K562 (cell line): ENCODE measurements at regions of chr11 and their contacts with region 1.

Region 1: GRCh38 chr11:63635762-63636465 is 21.7 kb upstream of the PLAAT3 start:
- DNase-seq: peak; percentile 63 to 73 (median 70)
- ATAC-seq: peak; percentile 91
- H3K4me3 ChIP-seq: no peak overlapping the region
- H3K27ac ChIP-seq: no peak overlapping the region
- H3K4me1 ChIP-seq: no peaks in the 10 kb centered on the region
- H3K27me3 ChIP-seq: no peaks in the 10 kb centered on the region
- CTCF ChIP-seq: peak; percentile 69 to 89 (median 81)
- EP300 ChIP-seq: no peak
- POLR2A ChIP-seq: no peak
- RAD21 ChIP-seq: peak; percentile 89 to 94

Region 2: GRCh38 chr11:63592975-63593395 is 42.9 kb before region 1 on chr11:
- CTCF ChIA-PET with region 1: no interaction called
- POLR2A ChIA-PET with region 1: no interaction called
- in situ Hi-C with region 1: no loop called
- intact Hi-C with region 1: loop called (anchors 5 kb)
- DNase-seq: peak in 3 of 4 experiments; percentile 34 to 38 (median 37)
- ATAC-seq: peak; percentile 85
- H3K4me3 ChIP-seq: no peak overlapping the region
- H3K27ac ChIP-seq: no peak overlapping the region
- H3K4me1 ChIP-seq: peaks cover 0 to 4% of the 10 kb centered on the region in 2 experiments; a peak in 1 of 5 replicates
- H3K27me3 ChIP-seq: peaks cover 11 to 33% of the 10 kb centered on the region in 2 experiments; a peak in 3 of 5 replicates
- CTCF ChIP-seq: peak; percentile 70 to 72 (median 71)
- EP300 ChIP-seq: no peak
- POLR2A ChIP-seq: no peak
- RAD21 ChIP-seq: peak; percentile 21 to 76; a peak in 3 of 4 replicates